Activated naive CD4-positive, alpha-beta T cell treated with anti-CD3 and anti-CD28 coated beads for 36 hours (primary cell): ENCODE measurements at regions of chr14 and their contacts with region 1.

Region 1: GRCh38 chr14:64923015-64923414 is 8.8 kb downstream of the CHURC1 start:
- DNase-seq: no peak
- H3K4me3 Mint-ChIP-seq: no peak overlapping the region
- H3K27ac Mint-ChIP-seq: no peak overlapping the region
- H3K4me1 Mint-ChIP-seq: peaks cover 58% of the 10 kb centered on the region
- H3K27me3 Mint-ChIP-seq: no peaks in the 10 kb centered on the region

Region 2: GRCh38 chr14:64885559-64885958 is 37.5 kb before region 1 on chr14:
- CTCF ChIA-PET with region 1: no interaction called
- intact Hi-C with region 1: no loop called
- DNase-seq: no peak
- H3K4me3 Mint-ChIP-seq: no peak overlapping the region
- H3K27ac Mint-ChIP-seq: no peak overlapping the region
- H3K4me1 Mint-ChIP-seq: peaks cover under 1% of the 10 kb centered on the region
- H3K27me3 Mint-ChIP-seq: peaks cover 11% of the 10 kb centered on the region

Region 3: DNA sequence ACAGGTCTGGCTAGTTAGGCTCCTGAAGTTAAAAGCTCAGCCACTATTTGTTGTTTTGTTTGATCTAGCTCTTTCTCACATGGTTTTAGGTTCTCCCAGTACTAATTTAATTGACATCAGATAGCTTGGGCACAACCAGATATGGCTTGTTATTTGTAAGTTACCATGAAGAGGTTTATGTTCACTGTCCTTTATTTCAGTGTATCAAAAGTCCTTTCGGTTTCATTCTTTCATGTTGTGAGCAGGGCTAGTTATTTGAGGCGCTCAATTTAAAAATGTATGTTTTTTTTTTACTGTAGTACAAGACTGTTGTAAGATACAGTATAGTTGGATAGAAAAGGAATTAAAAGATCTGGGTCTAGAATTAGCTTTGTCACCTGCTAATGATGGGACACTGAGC is 12.5 kb after region 1 on chr14:
- CTCF ChIA-PET with region 1: interaction called, 13 read pairs
- intact Hi-C with region 1: no loop called
- DNase-seq: no peak
- H3K4me3 Mint-ChIP-seq: no peak overlapping the region
- H3K27ac Mint-ChIP-seq: peak overlapping the region; percentile 5
- H3K4me1 Mint-ChIP-seq: peaks cover 49% of the 10 kb centered on the region
- H3K27me3 Mint-ChIP-seq: no peaks in the 10 kb centered on the region

Region 4: DNA sequence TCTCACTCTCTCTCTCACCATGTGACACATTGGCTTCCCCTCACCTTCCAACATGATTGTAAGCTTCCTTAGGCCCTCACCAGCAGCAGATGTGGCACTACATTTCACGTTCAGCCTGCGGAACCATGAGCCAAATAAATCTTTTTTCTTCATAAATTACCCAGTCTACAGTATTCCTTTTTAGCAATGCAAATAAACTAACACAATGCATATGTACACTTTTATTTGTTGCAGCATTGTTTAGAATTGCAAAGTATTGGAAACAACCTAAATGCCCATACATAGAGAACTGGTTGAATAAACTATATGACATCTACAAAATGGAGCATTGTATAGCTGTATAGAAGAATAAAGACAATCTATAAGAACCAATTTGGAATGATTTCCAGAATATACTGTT is 977.1 kb after region 1 on chr14:
- CTCF ChIA-PET with region 1: no interaction called
- intact Hi-C with region 1: no loop called
- DNase-seq: no peak
- H3K4me3 Mint-ChIP-seq: no peak overlapping the region
- H3K27ac Mint-ChIP-seq: no peak overlapping the region
- H3K4me1 Mint-ChIP-seq: no peaks in the 10 kb centered on the region
- H3K27me3 Mint-ChIP-seq: no peaks in the 10 kb centered on the region